Activated CD4-positive, alpha-beta T cell treated with anti-CD3 and anti-CD28 coated beads for 36 hours (primary cell): ENCODE measurements at regions of chr9 and their contacts with region 1.

Region 1: DNA sequence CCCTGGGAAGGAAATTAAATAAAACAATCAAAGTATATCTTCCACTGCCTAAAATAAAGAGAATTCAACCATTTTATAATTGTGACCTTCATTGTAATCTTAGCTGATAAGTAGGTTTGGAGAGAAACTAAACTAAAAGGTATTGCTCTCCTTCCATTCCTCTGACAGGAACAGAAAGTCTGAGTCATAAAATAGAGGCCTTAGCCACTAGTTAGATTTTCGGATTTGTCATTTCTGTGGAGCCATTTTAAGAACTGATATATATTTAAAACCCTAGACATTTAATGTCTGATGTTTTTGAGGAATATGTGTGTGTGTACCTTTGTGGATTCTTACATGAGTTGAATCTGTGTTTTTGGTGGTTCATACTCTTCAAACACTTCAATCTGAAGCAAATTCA is 11.8 kb upstream of the TMC1 start:
- DNase-seq: no peak
- ATAC-seq: peak; percentile 87
- H3K4me3 Mint-ChIP-seq: peak overlapping the region; percentile 29
- H3K27ac Mint-ChIP-seq: peak overlapping the region; percentile 87
- H3K4me1 Mint-ChIP-seq: peaks cover 17% of the 10 kb centered on the region
- H3K27me3 Mint-ChIP-seq: no peaks in the 10 kb centered on the region

Region 2: GRCh38 chr9:72557549-72557948 is 47.9 kb after region 1 on chr9:
- CTCF ChIA-PET with region 1: no interaction called
- POLR2A ChIA-PET with region 1: no interaction called
- intact Hi-C with region 1: loop called in 1 of 2 experiments (anchors 5 kb)
- DNase-seq: peak; percentile 70
- ATAC-seq: peak; percentile 99
- H3K4me3 Mint-ChIP-seq: no peak overlapping the region
- H3K27ac Mint-ChIP-seq: peak overlapping the region; percentile 6
- H3K4me1 Mint-ChIP-seq: peaks cover 11% of the 10 kb centered on the region
- H3K27me3 Mint-ChIP-seq: no peaks in the 10 kb centered on the region